ENCODE measurements at regions of chr1 and their contacts with region 1.

Region 1: DNA sequence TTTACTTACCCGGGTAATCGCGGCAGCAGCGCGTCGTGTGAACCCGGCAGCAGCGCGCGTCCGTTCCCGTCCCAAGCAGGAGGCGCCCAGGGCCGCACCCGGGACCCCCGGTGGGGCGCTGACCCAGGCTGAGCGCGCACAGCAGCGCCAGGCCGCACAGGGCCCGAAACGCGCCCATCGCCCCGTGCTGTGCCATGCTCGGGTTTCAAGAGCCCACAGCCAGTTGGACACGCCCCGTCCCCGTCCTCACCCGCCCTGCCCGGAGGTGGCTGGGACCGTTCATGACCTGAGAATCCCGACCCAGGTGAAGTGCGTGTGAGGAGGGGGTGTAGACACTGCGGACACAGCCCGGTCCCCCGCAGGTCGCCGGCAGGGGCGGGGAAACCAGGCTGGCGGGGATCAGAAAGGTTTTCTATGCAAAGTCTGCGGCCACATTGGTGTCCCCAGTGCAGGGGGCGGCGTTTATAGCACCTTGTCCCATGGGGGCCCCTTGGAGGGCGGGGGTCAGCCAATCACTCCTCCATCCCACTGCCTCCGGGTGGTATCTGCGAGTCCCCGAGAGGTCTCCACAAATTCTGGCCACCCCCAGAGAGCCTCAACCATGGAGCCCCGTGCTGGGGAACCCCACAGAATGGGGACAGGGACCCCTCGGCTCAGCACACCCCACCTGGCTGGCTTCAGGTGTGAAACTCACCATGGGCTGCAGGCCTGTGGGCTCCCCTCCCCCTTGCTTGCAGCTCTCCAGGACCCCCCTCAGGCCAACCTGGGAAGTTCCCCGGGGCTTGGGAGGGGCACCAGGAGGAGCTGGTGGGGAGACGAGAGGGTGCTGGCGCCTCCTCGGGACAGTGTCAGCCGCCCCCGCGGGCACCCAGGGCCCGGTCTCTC is at the start of gene TNFRSF18:
- DNase-seq: peak; percentile 47
- H3K4me3 Mint-ChIP-seq: peak within 1 kb of the TSS; percentile 86
- H3K27ac Mint-ChIP-seq: peak within 1 kb of the TSS; percentile 99
- H3K4me1 Mint-ChIP-seq: peaks cover 24% of the 10 kb centered on the region
- H3K27me3 Mint-ChIP-seq: no peaks in the 10 kb centered on the region
- total RNA-seq, gene TNFRSF18: 350 and 356 TPM in 2 replicates

Region 2: DNA sequence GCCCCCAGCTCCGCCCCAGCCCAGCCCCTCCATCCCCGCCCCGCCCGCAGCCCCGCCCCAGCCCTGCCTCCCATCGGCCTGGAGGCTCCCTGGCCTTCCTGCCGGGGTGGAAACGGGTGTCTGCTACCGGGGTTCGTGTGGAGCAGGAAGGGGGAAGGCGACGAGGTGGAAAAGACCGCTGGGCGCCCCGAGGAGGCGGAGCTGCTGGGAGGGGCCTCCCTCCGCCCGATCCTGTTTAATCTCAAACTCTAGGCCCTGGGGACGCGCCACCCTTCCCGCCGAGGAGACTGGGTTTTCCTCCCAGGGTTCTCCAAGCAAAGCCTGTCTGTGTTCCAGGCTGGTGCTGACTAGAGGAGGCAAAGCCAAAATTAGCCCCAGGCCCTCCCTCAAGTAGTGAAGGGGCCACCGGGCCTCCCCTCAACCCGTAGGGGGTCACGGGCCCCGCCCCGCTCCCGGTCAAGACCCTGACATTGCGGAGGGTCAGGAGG is 49.1 kb before region 1 on chr1:
- intact Hi-C with region 1: loop called (anchors 1 kb)
- DNase-seq: peak; percentile 59
- H3K4me3 Mint-ChIP-seq: peak overlapping the region; percentile 71
- H3K27ac Mint-ChIP-seq: peak overlapping the region; percentile 67
- H3K4me1 Mint-ChIP-seq: peaks cover 5% of the 10 kb centered on the region
- H3K27me3 Mint-ChIP-seq: no peaks in the 10 kb centered on the region

Region 3: DNA sequence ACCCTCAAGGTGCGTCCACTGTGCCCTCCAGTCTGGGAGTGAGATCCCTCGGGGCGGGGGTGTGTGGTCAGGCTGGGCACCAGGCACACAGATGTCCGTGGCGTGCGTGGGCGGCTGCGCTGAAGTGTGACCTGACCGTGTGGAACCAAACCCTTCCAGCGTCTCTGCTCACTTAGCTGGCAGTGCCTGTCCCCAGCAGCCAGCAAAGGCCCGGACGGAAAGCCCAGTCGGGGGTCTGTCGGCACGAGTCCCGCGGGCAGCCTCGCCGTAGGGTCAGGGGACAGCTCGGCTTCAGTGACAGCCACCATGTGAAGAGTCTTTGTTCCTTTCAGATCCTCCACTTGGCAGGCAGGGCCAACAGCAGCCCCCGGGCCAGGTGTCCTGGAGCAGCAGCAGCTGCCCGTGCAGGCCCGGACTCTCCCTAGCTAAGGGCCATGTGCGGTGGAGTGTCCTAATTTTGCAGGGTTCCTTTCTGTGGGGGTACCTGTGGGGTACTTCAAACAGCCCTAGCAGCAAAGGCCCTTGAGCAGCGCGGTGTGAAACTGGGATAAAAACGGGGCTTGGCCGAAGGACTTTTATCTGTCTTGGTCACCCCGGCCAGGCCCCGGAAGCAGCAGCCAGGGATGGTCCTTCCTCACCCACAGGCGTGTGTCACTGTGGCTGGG is 21.4 kb before region 1 on chr1:
- intact Hi-C with region 1: no loop called
- DNase-seq: no peak
- H3K4me3 Mint-ChIP-seq: no peak overlapping the region
- H3K27ac Mint-ChIP-seq: no peak overlapping the region
- H3K4me1 Mint-ChIP-seq: no peaks in the 10 kb centered on the region
- H3K27me3 Mint-ChIP-seq: peaks cover 20% of the 10 kb centered on the region

Region 4: GRCh38 chr1:2073382-2074230 is 867.0 kb after region 1 on chr1:
- intact Hi-C with region 1: no loop called
- DNase-seq: no peak
- H3K4me3 Mint-ChIP-seq: no peak overlapping the region
- H3K27ac Mint-ChIP-seq: no peak overlapping the region
- H3K4me1 Mint-ChIP-seq: no peaks in the 10 kb centered on the region
- H3K27me3 Mint-ChIP-seq: no peaks in the 10 kb centered on the region

Measured in activated T-helper 1 cell treated with anti-CD3 and anti-CD28 coated beads, Interleukin-12 subunit alpha, Interleukin-12 subunit beta, Interleukin-2, Interleukin-4 antibody, amounts not matched to agents 30 ng/mL and 10 ng/mL and 1 ng/mL, durations not matched to agents 14 hours and 24 hours and 36 hours (primary cell).